Activated CD4-positive, alpha-beta memory T cell treated with anti-CD3 and anti-CD28 coated beads for 36 hours (primary cell): ENCODE measurements at regions of chr5 and their contacts with region 1.

Region 1: GRCh38 chr5:179495906-179496455 is 54.4 kb upstream of the RUFY1 start:
- DNase-seq: no peak
- H3K4me3 Mint-ChIP-seq: no peak overlapping the region
- H3K27ac Mint-ChIP-seq: no peak overlapping the region
- H3K4me1 Mint-ChIP-seq: no peaks in the 10 kb centered on the region
- H3K27me3 Mint-ChIP-seq: no peaks in the 10 kb centered on the region

Region 2: DNA sequence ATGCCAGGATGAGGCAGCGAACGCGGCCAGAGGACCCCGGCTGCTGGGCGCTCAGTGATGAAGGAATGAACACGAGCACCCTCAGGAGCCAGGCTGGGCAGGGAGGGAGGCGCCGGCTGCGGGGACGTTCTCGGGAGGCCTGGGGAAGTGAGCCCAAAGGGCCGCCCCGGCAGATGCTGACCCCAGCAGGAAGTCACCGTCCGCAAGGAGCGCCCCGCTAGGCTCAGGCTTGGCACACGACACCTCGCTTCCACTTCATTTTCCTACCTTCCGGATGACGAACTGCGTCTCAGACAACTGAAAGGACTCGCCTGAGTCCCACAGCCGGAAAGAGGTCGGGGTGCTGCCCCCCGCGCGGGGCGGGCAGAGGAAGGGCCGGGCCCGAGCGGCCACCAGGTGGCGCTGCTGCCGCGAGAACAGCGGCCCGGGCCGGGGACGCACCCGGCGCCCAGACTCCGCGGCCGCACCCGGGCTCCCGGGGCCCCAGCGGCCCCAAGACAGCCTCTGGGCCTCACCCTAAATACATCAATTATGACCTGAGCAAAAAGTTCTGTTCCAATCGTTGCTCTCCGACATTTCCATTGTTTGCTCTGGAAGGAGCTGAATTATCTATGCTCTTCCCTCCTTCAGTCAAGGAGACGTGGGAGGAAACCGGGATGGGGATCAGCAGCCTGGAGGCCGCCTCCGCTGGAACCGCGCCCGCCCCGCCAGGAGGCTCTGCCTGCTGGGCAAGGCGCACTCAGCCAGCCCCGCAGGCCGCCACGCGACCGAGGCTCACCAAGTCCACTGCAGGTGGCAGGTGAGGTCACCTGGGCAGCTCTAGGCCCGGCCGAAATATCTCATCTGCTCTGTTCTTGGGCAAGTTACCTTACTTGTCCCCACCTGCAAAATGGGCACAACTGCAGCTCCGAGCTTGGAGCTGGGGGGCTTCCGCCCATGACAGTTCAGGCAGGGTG is 328.8 kb before region 1 on chr5:
- CTCF ChIA-PET with region 1: interaction called, 29 read pairs
- POLR2A ChIA-PET with region 1: no interaction called
- intact Hi-C with region 1: loop called (anchors 1 kb)
- DNase-seq: peak; percentile 72
- H3K4me3 Mint-ChIP-seq: peak overlapping the region; percentile 32
- H3K27ac Mint-ChIP-seq: no peak overlapping the region
- H3K4me1 Mint-ChIP-seq: peaks cover 3% of the 10 kb centered on the region
- H3K27me3 Mint-ChIP-seq: peaks cover 8% of the 10 kb centered on the region

Region 3: GRCh38 chr5:179336126-179336870 is 159.7 kb before region 1 on chr5:
- CTCF ChIA-PET with region 1: no interaction called
- POLR2A ChIA-PET with region 1: no interaction called
- intact Hi-C with region 1: no loop called
- DNase-seq: no peak
- H3K4me3 Mint-ChIP-seq: no peak overlapping the region
- H3K27ac Mint-ChIP-seq: no peak overlapping the region
- H3K4me1 Mint-ChIP-seq: no peaks in the 10 kb centered on the region
- H3K27me3 Mint-ChIP-seq: peaks cover 8% of the 10 kb centered on the region

Region 4: DNA sequence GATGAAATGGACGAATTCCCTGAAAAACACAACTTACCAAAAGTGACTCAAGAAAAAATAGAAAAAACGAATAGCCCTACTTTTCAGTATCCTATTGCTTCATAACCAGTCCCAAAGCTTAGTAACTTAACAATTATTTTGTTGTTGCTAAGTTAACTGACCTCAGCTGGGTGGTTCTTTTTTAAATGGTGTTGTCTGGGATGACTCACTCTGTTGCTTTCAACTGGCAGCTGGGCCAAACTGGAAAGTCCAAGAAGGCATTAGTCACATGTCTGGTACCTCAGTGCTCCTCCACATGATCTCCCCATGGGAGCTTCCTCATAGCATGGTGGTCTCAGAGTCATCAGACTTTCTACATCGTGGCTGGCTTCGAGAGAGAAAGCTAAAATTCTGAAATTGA is 102.9 kb before region 1 on chr5:
- CTCF ChIA-PET with region 1: no interaction called
- POLR2A ChIA-PET with region 1: no interaction called
- intact Hi-C with region 1: no loop called
- DNase-seq: no peak
- H3K4me3 Mint-ChIP-seq: no peak overlapping the region
- H3K27ac Mint-ChIP-seq: no peak overlapping the region
- H3K4me1 Mint-ChIP-seq: no peaks in the 10 kb centered on the region
- H3K27me3 Mint-ChIP-seq: peaks cover 17% of the 10 kb centered on the region